Activated CD4-positive, alpha-beta T cell treated with anti-CD3 and anti-CD28 coated beads for 36 hours (primary cell): ENCODE measurements at regions of chr1 and their contacts with region 1.

Region 1: GRCh38 chr1:114757455-114758250 is at the start of gene CSDE1:
- DNase-seq: peak; percentile 98
- ATAC-seq: peak; percentile 87
- H3K4me3 Mint-ChIP-seq: peak within 1 kb of the TSS; percentile 99
- H3K27ac Mint-ChIP-seq: peak within 1 kb of the TSS; percentile 99
- H3K4me1 Mint-ChIP-seq: peaks cover 53% of the 10 kb centered on the region
- H3K27me3 Mint-ChIP-seq: no peaks in the 10 kb centered on the region
- total RNA-seq, gene CSDE1: 458 to 553 TPM

Region 2: DNA sequence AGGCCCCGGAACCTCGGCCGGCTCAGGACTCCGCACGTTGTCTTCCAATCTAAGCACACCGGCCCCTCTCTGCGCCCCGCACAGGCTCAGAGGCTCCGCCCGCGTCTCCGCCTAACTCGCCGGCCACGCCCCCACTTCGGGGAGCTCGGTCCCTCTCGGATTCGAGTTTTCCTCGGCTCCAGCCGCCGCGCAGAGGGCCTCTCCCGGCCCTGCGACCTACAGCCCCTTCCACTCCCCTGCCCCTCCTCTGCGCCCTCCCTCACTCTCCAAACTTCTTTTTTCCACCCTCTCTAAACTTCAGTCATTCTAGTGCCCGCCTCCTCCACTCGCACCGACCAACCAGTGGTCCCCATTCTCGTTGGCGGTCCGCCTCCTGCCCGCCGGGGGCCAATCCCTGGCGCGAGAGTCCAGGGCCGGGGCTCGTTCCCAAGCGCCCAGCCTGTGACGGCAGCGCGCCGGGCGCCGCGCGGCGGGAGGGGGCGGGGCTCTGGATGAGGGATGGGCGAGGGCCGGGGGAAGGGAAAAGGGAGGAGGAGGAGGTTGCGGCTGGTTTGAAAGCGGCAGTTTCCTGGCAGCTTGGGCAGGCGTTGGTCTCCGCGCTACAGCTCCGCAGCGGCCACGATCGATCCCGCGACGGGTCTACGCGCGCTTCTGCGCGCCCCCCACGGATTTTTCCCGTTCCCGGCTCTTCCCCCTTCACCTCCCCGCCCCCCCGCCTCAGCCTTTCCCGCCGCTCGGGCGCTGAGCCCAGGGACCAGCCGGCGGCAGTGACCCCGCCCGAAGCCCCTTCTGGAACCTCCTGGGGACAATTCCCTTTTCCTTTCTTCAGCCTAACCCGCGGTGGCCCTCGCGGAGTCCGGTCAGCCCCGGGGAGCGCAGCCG is 1367.5 kb before region 1 on chr1 and contains the start of gene MAGI3:
- CTCF ChIA-PET with region 1: no interaction called
- POLR2A ChIA-PET with region 1: no interaction called
- intact Hi-C with region 1: loop called in 1 of 2 experiments (anchors 1 kb)
- DNase-seq: peak; percentile 97
- ATAC-seq: peak; percentile 97
- H3K4me3 Mint-ChIP-seq: peak within 1 kb of the TSS; percentile 86
- H3K27ac Mint-ChIP-seq: peak within 1 kb of the TSS; percentile 79
- H3K4me1 Mint-ChIP-seq: peaks cover 23% of the 10 kb centered on the region
- H3K27me3 Mint-ChIP-seq: peaks cover 5% of the 10 kb centered on the region
- total RNA-seq, gene MAGI3: 6.4 to 6.7 TPM

Region 3: DNA sequence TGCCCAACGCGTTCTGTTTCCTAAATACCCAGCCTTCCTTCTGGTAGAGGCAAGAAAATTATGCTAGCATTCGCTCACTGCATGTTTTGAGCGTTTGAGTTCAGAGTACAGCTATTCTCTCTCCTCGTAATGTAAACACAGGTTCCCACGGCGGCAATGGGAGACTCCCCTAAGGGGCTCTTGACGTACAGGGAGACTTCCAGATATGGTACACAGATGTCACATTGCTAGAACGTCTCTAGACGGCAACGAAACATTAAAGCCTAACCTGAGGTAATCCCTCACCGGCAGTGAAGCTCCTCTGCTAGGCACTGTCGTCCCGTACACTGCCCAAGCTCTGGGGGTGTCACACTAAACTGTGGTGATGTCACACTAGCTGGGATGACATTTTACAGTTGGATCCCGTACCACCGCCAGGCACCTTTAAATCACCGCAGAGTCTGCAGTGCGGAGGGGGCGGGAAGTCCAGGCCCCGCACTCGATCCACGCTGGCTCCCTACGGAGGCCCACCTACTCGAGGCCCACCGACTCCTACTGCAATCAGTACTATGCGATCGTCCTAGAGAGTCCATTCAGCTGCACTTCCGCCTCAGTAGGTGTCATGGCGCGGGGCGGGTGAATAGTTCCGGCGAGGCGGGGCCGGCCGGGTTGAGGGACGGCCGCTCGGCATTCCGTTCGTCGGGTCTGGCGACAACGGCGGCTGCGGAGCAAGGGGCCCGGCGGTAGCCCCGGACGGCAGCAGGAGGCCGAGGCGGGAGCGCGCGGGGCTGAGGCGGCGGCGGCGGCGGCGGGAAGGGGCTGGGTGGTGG is 828.5 kb before region 1 on chr1 and contains the start of gene HIPK1:
- CTCF ChIA-PET with region 1: no interaction called
- POLR2A ChIA-PET with region 1: no interaction called
- intact Hi-C with region 1: loop called in 1 of 2 experiments (anchors 2 kb)
- DNase-seq: peak; percentile 96
- ATAC-seq: peak; percentile 66
- H3K4me3 Mint-ChIP-seq: peak within 1 kb of the TSS; percentile 84
- H3K27ac Mint-ChIP-seq: peak within 1 kb of the TSS; percentile 99
- H3K4me1 Mint-ChIP-seq: peaks cover 41% of the 10 kb centered on the region
- H3K27me3 Mint-ChIP-seq: no peaks in the 10 kb centered on the region
- total RNA-seq, gene HIPK1: 42.2 to 50.3 TPM

Region 4: DNA sequence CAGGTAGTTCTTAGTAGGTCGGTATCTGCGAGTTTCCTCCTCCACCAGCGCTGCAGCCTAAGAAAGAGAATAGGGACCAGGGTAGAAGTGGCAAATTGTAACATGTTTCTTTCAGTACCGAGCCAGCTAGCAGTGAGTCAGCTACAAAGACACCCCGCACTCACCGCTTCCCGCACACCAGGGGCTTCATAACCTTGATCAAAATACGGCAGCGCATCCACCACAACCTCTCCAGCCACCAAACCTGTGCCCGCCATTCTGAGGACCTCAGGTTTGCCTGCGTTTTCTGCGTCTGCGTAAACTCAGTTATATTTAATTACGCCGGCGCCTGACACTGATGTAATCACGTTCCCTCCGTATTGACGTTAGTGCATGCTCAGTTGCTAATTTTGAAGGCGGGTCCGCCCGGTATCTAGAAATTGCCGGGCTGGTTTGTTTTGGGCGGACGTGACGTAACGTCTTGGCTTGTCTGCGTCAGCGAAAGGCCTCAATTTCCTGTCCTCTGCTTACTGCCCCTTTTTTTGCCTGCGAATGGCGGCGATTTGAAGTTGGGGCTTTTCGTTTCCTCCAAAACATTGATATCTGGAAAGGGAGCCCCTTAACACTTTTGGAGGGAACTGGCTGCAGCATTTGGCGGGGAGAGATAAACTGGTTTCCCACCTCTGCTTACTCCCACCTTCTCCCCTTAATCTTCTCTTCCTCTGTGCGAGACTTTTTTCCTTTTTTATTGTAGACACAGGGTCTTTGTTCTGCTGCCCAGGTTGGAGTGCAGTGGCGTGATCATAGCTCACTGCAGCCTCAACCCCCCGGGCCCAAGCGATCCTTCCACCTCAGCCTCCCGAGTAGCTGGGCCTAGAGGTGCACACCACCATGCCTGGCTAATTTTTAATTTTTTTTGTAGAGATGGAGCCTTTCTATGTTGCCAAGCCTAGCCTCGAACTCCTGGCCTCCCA is 176.0 kb before region 1 on chr1 and contains the start of gene BCAS2:
- CTCF ChIA-PET with region 1: no interaction called
- POLR2A ChIA-PET with region 1: no interaction called
- intact Hi-C with region 1: loop called (anchors 1 kb)
- DNase-seq: peak; percentile 97
- ATAC-seq: peak; percentile 99
- H3K4me3 Mint-ChIP-seq: peak within 1 kb of the TSS; percentile 97
- H3K27ac Mint-ChIP-seq: peak within 1 kb of the TSS; percentile 98
- H3K4me1 Mint-ChIP-seq: peaks cover 29% of the 10 kb centered on the region
- H3K27me3 Mint-ChIP-seq: peaks cover 1% of the 10 kb centered on the region
- total RNA-seq, gene BCAS2: 54.1 to 54.8 TPM

Region 5: GRCh38 chr1:114691061-114691460 is 66.6 kb before region 1 on chr1:
- CTCF ChIA-PET with region 1: no interaction called
- POLR2A ChIA-PET with region 1: no interaction called
- intact Hi-C with region 1: no loop called
- DNase-seq: no peak
- ATAC-seq: no peak
- H3K4me3 Mint-ChIP-seq: no peak overlapping the region
- H3K27ac Mint-ChIP-seq: no peak overlapping the region
- H3K4me1 Mint-ChIP-seq: no peaks in the 10 kb centered on the region
- H3K27me3 Mint-ChIP-seq: peaks cover 22% of the 10 kb centered on the region

Region 6: DNA sequence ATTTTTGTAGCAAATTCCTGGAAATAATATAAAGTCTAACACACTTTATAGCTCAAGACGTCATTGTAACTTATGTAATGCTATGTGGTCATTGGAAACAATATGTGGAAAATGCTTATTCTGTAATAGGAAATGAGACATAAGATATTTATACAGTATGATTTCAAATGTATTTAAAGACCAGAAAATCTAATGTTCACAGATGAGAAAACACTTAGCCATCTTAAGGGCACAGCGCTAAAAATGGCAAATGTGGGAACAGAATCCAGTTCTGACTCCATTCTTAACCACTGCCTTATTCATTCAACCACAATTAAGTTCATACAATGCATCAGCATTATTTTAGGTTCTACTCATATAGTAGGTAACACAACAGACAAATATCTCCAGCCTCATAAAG is 12.4 kb before region 1 on chr1:
- CTCF ChIA-PET with region 1: interaction called, 6 read pairs
- POLR2A ChIA-PET with region 1: interaction called, 9 read pairs
- intact Hi-C with region 1: loop called (anchors 1 kb)
- DNase-seq: peak; percentile 29
- ATAC-seq: peak; percentile 80
- H3K4me3 Mint-ChIP-seq: no peak overlapping the region
- H3K27ac Mint-ChIP-seq: peak overlapping the region; percentile 37
- H3K4me1 Mint-ChIP-seq: peaks cover 80% of the 10 kb centered on the region
- H3K27me3 Mint-ChIP-seq: no peaks in the 10 kb centered on the region

Region 7: DNA sequence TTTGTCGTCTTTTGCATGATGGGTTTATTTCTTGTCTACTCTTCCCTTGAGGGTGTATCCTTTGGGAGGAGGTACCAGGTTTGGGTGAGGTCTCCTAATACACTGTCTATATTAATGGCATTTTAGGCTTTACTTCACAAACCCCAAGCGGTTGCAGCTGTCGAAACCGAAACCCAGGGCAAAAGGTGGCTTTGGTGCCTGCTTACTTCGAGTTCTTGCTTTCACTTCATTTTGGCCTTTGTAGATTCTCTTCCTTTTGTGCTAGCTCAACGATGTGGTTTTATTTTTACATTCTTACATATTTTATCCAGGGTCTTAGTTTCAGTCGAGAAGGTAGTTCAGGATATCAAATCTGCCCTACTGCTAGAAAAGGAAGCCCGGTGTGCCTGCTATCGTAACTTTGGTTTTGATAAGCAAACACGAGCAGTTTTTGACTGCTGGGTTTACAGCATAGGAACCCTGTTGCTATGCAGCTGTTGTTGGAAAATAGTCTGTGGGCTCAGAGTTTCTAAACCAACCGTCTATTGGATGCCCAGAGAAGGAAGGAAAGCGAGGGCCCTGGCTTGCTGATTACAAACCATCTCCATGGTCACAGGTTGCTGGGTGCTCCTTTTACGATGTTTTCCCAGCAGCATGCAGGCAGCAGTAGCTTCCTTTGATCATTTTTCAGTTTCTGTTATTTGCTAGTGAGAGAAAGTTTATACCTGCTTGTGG is 341.5 kb after region 1 on chr1:
- CTCF ChIA-PET with region 1: no interaction called
- POLR2A ChIA-PET with region 1: no interaction called
- intact Hi-C with region 1: loop called in 1 of 2 experiments (anchors 5 kb)
- DNase-seq: peak; percentile 80
- ATAC-seq: peak; percentile 80
- H3K4me3 Mint-ChIP-seq: peak overlapping the region; percentile 75
- H3K27ac Mint-ChIP-seq: peak overlapping the region; percentile 69
- H3K4me1 Mint-ChIP-seq: peaks cover 39% of the 10 kb centered on the region
- H3K27me3 Mint-ChIP-seq: no peaks in the 10 kb centered on the region